ENCODE measurements at regions of chr6 and their contacts with region 1.

Region 1: GRCh38 chr6:125749173-125749864 is at the start of gene HEY2:
- DNase-seq: peak; percentile 93 to 96
- ATAC-seq: peak; percentile 86 to 97 (median 93)
- H3K4me3 ChIP-seq: peak within 1 kb of the TSS; percentile 60 to 87 (median 76)
- H3K27ac ChIP-seq: peak within 1 kb of the TSS; percentile 88 to 98 (median 96)
- H3K4me1 ChIP-seq: peaks cover 0 to 56% (median 23%) of the 10 kb centered on the region in 9 donors
- H3K27me3 ChIP-seq: peaks cover 0 to 90% (median 0%) of the 10 kb centered on the region in 7 donors
- CTCF ChIP-seq: peak in 4 of 9 donors; percentile 7 to 30 (median 28)
- total RNA-seq, gene HEY2: 12.4 to 75.1 (median 36.2) TPM

Region 2: GRCh38 chr6:125363039-125363823 is 386.1 kb before region 1 on chr6:
- intact Hi-C with region 1: loop called in 4 of 10 experiments (anchors 2 to 5 kb)
- DNase-seq: peak; percentile 70 to 86
- ATAC-seq: peak; percentile 82 to 95 (median 88)
- H3K4me3 ChIP-seq: peak overlapping the region; percentile 36 to 61 (median 54)
- H3K27ac ChIP-seq: peak overlapping the region; percentile 66 to 93 (median 81)
- H3K4me1 ChIP-seq: peaks cover 0 to 42% (median 18%) of the 10 kb centered on the region in 9 donors
- H3K27me3 ChIP-seq: peaks cover 0 to 40% (median 0%) of the 10 kb centered on the region in 7 donors
- CTCF ChIP-seq: peak in 1 of 9 donors; percentile 10

Region 3: GRCh38 chr6:125584468-125585029 is 164.8 kb before region 1 on chr6:
- intact Hi-C with region 1: loop called in 7 of 10 experiments (anchors 2 to 10 kb)
- DNase-seq: peak; percentile 44 to 60
- ATAC-seq: peak; percentile 81 to 97 (median 93)
- H3K4me3 ChIP-seq: no peak overlapping the region
- H3K27ac ChIP-seq: peak overlapping the region in 9 of 10 donors; percentile 45 to 77 (median 58)
- H3K4me1 ChIP-seq: peaks cover 0 to 30% (median 4%) of the 10 kb centered on the region in 9 donors
- H3K27me3 ChIP-seq: peaks cover 0 to 3% (median 0%) of the 10 kb centered on the region in 7 donors
- CTCF ChIP-seq: peak in 5 of 9 donors; percentile 11 to 57 (median 46)

Region 4: GRCh38 chr6:125611573-125612344 is 137.6 kb before region 1 on chr6:
- intact Hi-C with region 1: loop called in 1 of 10 experiments (anchors 5 kb)
- DNase-seq: peak in 1 of 2 donors; percentile 17
- ATAC-seq: peak; percentile 37 to 90 (median 66)
- H3K4me3 ChIP-seq: peak overlapping the region in 8 of 10 donors; percentile 14 to 35 (median 30)
- H3K27ac ChIP-seq: peak overlapping the region in 9 of 10 donors; percentile 2 to 68 (median 37)
- H3K4me1 ChIP-seq: peaks cover 0 to 21% (median 10%) of the 10 kb centered on the region in 9 donors
- H3K27me3 ChIP-seq: no peaks in the 10 kb centered on the region
- CTCF ChIP-seq: no peak

Region 5: DNA sequence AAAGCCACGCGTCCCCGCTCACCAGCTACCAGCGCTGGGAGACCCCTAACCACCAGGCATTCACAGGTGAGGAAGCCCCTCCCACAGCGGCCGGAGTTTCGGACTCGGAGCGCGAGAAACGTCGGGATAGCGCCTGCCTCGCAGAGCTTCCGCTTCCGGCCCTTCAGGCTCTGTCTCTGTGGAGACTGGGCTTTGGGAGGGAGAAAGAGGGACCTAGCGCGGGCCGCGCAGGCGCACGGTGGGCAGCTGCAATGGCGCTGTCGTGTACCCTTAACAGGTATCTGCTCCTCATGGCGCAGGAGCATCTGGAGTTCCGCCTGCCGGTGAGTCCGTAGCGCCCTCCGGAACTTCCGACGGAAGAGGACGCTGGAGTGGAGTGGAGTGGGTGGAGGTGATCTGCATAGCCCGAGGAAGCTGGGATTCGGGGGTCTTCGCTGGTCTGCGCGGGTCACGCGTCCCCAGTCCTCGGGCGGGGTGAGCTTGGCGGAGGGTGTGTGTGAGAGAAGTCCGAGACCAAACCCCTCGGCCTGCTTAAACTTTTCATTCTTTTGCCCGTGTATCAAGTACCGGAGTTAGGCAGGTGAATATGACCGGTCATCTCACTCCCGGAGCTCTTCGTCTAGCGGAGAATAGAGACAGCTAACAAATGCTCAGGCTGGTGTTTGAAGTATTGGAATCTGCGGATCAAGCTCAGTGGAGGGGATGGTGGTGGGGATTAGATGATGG is 237.1 kb after region 1 on chr6 and contains the start of gene TRMT11:
- intact Hi-C with region 1: no loop called
- DNase-seq: peak; percentile 85 to 87
- ATAC-seq: peak; percentile 98 to 100 (median 99)
- H3K4me3 ChIP-seq: peak within 1 kb of the TSS; percentile 50 to 93 (median 75)
- H3K27ac ChIP-seq: peak within 1 kb of the TSS in 9 of 10 donors; percentile 53 to 83 (median 76)
- H3K4me1 ChIP-seq: peaks cover 0 to 19% (median 13%) of the 10 kb centered on the region in 9 donors
- H3K27me3 ChIP-seq: no peaks in the 10 kb centered on the region
- CTCF ChIP-seq: peak in 2 of 9 donors; percentile 7 to 21
- total RNA-seq, gene TRMT11: 9.8 to 15.8 (median 11.0) TPM